A673 (cell line): ENCODE measurements at regions of chr17 and their contacts with region 1.

Region 1: DNA sequence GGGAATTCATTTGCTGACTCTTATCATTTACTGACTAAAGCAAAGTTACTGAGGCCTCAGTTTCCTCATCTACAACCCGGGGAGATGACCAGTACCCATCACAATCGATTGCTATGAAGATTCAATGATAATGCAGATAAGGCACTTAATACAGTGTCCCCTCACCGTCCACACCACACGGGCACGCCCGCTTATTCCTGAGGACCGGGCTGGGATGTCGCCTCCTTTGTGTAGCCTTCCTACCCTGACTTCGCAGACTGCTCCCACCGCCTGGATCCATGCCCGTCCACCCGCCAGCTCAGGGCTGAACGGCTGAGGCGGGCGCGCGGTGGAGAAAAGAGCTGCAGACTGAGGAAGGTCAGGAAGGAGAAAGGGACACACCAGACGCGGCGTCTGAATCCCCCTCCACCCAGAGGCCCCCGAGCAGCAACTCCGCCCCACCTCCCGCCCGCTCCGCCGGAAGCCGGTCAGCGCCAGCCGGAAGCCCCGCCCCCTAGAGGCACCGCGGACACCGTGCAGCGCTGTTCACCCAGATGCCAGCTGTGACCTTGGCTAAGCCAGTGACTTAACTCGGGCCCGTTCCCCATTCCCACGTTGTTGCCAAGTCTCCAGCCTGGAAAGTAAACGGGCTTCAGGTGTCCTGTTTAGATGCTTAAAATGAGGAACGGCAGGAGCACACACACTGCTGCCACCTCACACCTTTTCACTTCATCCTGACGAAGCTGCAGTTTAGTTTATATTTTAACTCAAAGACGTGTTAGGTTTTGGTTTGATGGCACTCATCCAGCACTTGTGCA is at the start of gene KRABD2:
- DNase-seq: peak; percentile 94
- H3K4me3 ChIP-seq: peak within 1 kb of the TSS; percentile 92
- H3K27ac ChIP-seq: peak within 1 kb of the TSS; percentile 91
- H3K4me1 ChIP-seq: peaks cover 42% of the 10 kb centered on the region
- H3K27me3 ChIP-seq: no peaks in the 10 kb centered on the region
- CTCF ChIP-seq: peak; percentile 74

Region 2: GRCh38 chr17:8029135-8029534 is 347.3 kb before region 1 on chr17:
- CTCF ChIA-PET with region 1: no interaction called
- POLR2A ChIA-PET with region 1: interaction called, 16 read pairs
- intact Hi-C with region 1: no loop called
- DNase-seq: no peak
- H3K4me3 ChIP-seq: no peak overlapping the region
- H3K27ac ChIP-seq: no peak overlapping the region
- H3K4me1 ChIP-seq: no peaks in the 10 kb centered on the region
- H3K27me3 ChIP-seq: no peaks in the 10 kb centered on the region
- CTCF ChIP-seq: no peak

Region 3: DNA sequence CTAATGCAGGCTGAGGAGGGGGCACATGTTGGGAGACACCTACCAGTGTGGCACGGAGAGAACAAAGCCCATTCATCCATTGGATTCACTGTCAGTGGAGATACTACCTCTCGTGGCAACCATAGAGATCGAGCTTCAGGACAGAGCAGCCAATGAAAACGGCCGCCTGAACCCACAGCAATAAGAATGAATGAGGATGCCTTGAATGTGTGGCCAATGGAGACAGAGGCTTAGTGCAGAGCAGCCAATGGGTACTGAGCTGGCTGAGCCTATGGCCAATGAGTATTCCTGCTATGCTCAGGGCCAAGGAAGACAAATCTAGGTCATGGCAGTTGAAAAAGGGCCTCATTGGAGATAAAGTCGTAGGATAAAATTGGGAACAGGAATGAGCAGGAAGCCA is 55.5 kb before region 1 on chr17:
- CTCF ChIA-PET with region 1: no interaction called
- POLR2A ChIA-PET with region 1: no interaction called
- intact Hi-C with region 1: no loop called
- DNase-seq: no peak
- H3K4me3 ChIP-seq: no peak overlapping the region
- H3K27ac ChIP-seq: no peak overlapping the region
- H3K4me1 ChIP-seq: no peaks in the 10 kb centered on the region
- H3K27me3 ChIP-seq: peaks cover 7% of the 10 kb centered on the region
- CTCF ChIP-seq: no peak